ENCODE measurements at regions of chr2 and their contacts with region 1.

Region 1: GRCh38 chr2:176103742-176104324 is 3.2 kb upstream of the HOXD11 start:
- DNase-seq: no peak
- H3K4me3 ChIP-seq: peak overlapping the region in 2 of 4 donors; percentile 37 to 52
- H3K27ac ChIP-seq: peak overlapping the region in 3 of 4 donors; percentile 51 to 79 (median 68)
- H3K4me1 ChIP-seq: peaks cover 7 to 37% (median 25%) of the 10 kb centered on the region in 4 donors
- H3K27me3 ChIP-seq: peaks cover 98% of the 10 kb centered on the region
- CTCF ChIP-seq: no peak
- EP300 ChIP-seq: no peak
- POLR2A ChIP-seq: no peak

Region 2: GRCh38 chr2:175698061-175698460 is 405.8 kb before region 1 on chr2:
- in situ Hi-C with region 1: loop called in 1 of 4 experiments (anchors 25 kb)
- intact Hi-C with region 1: loop called (anchors 2 kb)
- DNase-seq: no peak
- H3K4me3 ChIP-seq: no peak overlapping the region
- H3K27ac ChIP-seq: no peak overlapping the region
- H3K4me1 ChIP-seq: no peaks in the 10 kb centered on the region
- H3K27me3 ChIP-seq: peaks cover 17% of the 10 kb centered on the region
- CTCF ChIP-seq: no peak
- EP300 ChIP-seq: no peak
- POLR2A ChIP-seq: no peak

Measured in transverse colon (tissue), 4 donors.